BJ (cell line): ENCODE measurements at regions of chr12 and their contacts with region 1.

Region 1: GRCh38 chr12:52884526-52885293 is 20.2 kb downstream of the KRT8 start:
- DNase-seq: no peak
- H3K4me3 ChIP-seq: no peak overlapping the region
- H3K27me3 ChIP-seq: no peaks in the 10 kb centered on the region
- CTCF ChIP-seq: peak; percentile 89

Region 2: DNA sequence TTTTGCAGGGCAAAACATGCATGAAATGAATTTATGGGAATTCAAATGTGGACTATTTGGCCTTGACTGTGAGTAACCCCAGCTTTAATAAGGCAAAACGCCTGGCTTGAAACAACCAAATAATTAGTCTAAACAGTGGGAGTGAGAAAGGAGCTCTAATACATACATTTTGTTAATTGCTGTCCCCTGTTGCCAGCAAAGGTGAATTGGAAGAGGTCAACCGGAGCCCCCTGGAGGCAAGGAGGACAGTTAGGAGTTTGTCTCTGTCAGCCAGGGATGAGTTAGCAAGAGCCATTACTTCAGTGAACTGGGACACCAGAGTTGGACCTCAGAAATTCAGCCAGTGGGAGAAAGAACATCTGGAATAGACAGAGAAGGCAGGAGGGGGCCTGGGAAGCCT is 125.0 kb before region 1 on chr12:
- CTCF ChIA-PET with region 1: no interaction called
- POLR2A ChIA-PET with region 1: no interaction called
- DNase-seq: no peak
- H3K4me3 ChIP-seq: no peak overlapping the region
- H3K27me3 ChIP-seq: no peaks in the 10 kb centered on the region; the same call in 1 of the 2 replicates
- CTCF ChIP-seq: no peak

Region 3: GRCh38 chr12:52870351-52871290 is 14.1 kb before region 1 on chr12:
- CTCF ChIA-PET with region 1: interaction called, 34 read pairs
- POLR2A ChIA-PET with region 1: no interaction called
- DNase-seq: no peak
- H3K4me3 ChIP-seq: no peak overlapping the region
- H3K27me3 ChIP-seq: no peaks in the 10 kb centered on the region
- CTCF ChIP-seq: peak; percentile 75

Region 4: GRCh38 chr12:52910248-52910883 is 25.7 kb after region 1 on chr12:
- CTCF ChIA-PET with region 1: interaction called, 16 read pairs
- POLR2A ChIA-PET with region 1: no interaction called
- DNase-seq: no peak
- H3K4me3 ChIP-seq: no peak overlapping the region
- H3K27me3 ChIP-seq: no peaks in the 10 kb centered on the region; the same call in 1 of the 2 replicates
- CTCF ChIP-seq: no peak

Region 5: DNA sequence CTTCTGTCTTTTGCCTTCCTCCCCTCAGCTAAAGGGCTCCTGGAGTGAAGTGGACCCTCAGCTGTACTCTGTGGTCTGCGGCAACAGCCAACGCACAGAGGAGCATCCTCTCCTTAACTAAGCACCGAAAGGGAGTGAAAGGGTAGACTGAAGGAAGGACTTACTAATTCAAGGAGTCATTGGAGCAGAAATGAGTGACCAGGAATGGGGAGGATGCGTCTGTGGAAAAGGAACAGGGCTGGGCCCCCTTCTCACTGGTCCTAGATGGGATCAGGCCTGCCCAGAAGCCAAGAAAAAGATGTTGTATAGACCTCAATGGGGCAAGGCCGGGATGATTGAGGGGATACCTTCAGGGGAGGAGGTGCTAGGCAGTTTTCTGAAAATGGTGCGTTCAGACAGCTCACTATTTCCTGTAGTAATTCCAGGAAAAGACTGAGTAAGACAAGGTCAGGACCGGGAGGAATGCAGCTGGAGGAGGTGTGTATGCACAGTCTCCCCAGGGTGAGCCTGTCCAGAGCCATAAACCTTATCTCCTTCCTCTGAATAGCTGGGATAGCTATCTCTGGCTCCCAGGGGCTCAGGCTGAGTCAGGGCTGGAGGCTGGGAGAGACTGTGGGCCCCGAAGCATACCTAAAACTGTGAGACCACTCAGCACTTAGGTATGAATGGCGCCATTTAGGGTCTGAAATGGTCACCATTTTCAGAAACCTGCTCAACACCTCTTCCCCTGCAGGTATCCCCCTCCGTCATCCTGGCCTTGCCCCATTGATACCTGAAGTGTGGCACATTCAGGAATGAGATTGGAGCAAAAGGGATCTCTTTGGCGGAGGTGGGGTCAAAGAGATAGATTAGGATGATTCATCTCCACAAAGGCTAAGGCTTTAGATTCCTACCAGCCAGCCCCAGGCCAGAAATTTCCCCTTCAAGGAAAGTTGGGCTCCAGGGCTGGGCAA is 40.3 kb after region 1 on chr12:
- CTCF ChIA-PET with region 1: interaction called, 37 read pairs
- POLR2A ChIA-PET with region 1: no interaction called
- DNase-seq: peak; percentile 51
- H3K4me3 ChIP-seq: no peak overlapping the region
- H3K27me3 ChIP-seq: no peaks in the 10 kb centered on the region
- CTCF ChIP-seq: no peak

Region 6: GRCh38 chr12:52949413-52950331 is 65.0 kb after region 1 on chr12:
- CTCF ChIA-PET with region 1: interaction called, 25 read pairs
- POLR2A ChIA-PET with region 1: no interaction called
- DNase-seq: peak; percentile 73
- H3K4me3 ChIP-seq: peak overlapping the region; percentile 75
- H3K27me3 ChIP-seq: no peaks in the 10 kb centered on the region
- CTCF ChIP-seq: no peak

Region 7: GRCh38 chr12:52969828-52970569 is 85.3 kb after region 1 on chr12:
- CTCF ChIA-PET with region 1: interaction called, 75 read pairs
- POLR2A ChIA-PET with region 1: no interaction called
- DNase-seq: no peak
- H3K4me3 ChIP-seq: no peak overlapping the region
- H3K27me3 ChIP-seq: no peaks in the 10 kb centered on the region
- CTCF ChIP-seq: no peak

Region 8: GRCh38 chr12:52992699-52993557 is 108.2 kb after region 1 on chr12:
- CTCF ChIA-PET with region 1: interaction called, 722 read pairs
- POLR2A ChIA-PET with region 1: no interaction called
- DNase-seq: no peak
- H3K4me3 ChIP-seq: no peak overlapping the region
- H3K27me3 ChIP-seq: no peaks in the 10 kb centered on the region
- CTCF ChIP-seq: no peak